Heart right ventricle (tissue), 16 donors: ENCODE measurements at regions of chr5 and their contacts with region 1.

Region 1: GRCh38 chr5:36695677-36696673 is 89.6 kb downstream of the SLC1A3 start:
- DNase-seq: peak; percentile 29 to 42
- ATAC-seq: peak in 1 of 8 donors; percentile 38
- H3K4me3 ChIP-seq: no peak overlapping the region
- H3K27ac ChIP-seq: no peak overlapping the region
- H3K4me1 ChIP-seq: peaks cover 5 to 35% (median 19%) of the 10 kb centered on the region in 9 donors
- H3K27me3 ChIP-seq: no peaks in the 10 kb centered on the region
- CTCF ChIP-seq: peak; percentile 27 to 71 (median 64)

Region 2: GRCh38 chr5:36264202-36264760 is 431.7 kb before region 1 on chr5:
- intact Hi-C with region 1: loop called in 5 of 10 experiments (anchors 5 to 10 kb)
- DNase-seq: no peak
- ATAC-seq: no peak
- H3K4me3 ChIP-seq: no peak overlapping the region
- H3K27ac ChIP-seq: no peak overlapping the region
- H3K4me1 ChIP-seq: no peaks in the 10 kb centered on the region
- H3K27me3 ChIP-seq: no peaks in the 10 kb centered on the region
- CTCF ChIP-seq: no peak

Region 3: DNA sequence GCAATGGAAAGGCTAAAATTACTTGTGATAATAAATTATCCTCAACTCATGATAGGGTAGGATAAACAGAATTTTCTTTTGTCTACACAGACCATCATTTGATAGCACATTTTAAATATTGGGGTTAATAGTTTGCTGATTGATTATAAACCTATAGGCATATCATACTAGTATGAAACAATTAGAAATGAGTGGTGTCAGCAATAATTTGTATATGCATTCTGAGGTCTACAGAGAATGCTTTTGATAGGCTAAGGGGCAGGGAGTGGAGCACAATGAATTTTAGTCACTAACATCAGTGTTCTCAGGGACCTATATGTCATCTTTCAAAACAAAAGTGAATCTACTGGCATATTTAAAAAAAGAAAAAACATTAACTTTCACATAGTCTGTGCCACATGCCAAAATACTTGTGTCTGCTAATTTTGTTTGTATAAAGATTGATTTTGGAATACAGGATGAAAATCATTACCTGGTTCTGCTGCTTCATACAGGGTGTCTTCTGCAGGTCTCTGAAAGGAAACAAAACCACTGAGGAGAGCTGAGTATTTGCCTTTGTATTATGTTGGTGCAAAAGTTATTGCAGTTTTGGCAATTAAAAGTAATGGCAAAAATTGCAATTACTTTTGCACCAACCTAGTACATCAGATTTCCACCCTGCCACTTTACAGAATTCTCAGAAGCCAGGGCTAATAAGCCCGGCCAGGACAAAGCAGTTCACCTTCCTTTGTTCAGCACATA is 426.3 kb before region 1 on chr5:
- intact Hi-C with region 1: loop called in 5 of 10 experiments (anchors 5 to 10 kb)
- DNase-seq: no peak
- ATAC-seq: no peak
- H3K4me3 ChIP-seq: no peak overlapping the region
- H3K27ac ChIP-seq: no peak overlapping the region
- H3K4me1 ChIP-seq: peaks cover 0 to 7% (median 0%) of the 10 kb centered on the region in 9 donors
- H3K27me3 ChIP-seq: no peaks in the 10 kb centered on the region
- CTCF ChIP-seq: no peak